ENCODE measurements at regions of chr1 and their contacts with region 1.

Region 1: DNA sequence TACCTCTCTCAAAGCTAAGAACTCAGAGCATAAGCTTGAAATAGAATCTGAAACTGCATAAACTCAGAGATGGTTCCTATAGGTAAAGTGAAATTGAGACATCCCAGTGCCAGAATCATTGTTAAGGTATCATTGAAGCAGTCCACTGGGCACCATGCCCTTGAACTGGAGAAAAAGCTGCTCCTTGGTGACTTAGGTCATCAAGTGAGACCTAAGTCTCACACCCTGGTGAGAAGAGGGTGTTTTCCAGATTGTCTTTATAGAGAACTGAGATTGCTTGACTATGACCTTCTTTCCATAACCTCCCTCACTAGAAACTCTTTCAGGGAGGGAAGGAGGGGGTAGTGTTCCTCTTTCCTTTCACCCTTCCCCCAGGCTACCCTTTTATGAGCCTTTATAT is 9.4 kb upstream of the ATP6V1G3 start:
- DNase-seq: no peak
- H3K4me3 ChIP-seq: no peak overlapping the region
- H3K27ac ChIP-seq: peak overlapping the region in 5 of 8 donors; percentile 8 to 36 (median 10)
- H3K4me1 ChIP-seq: peaks cover 0 to 41% (median 16%) of the 10 kb centered on the region in 6 donors
- H3K27me3 ChIP-seq: no peaks in the 10 kb centered on the region
- CTCF ChIP-seq: no peak
- POLR2A ChIP-seq: no peak

Region 2: GRCh38 chr1:198598796-198599321 is 49.0 kb after region 1 on chr1:
- intact Hi-C with region 1: loop called (anchors 10 kb)
- DNase-seq: peak; percentile 66
- H3K4me3 ChIP-seq: peak overlapping the region in 2 of 8 donors; percentile 24 to 54
- H3K27ac ChIP-seq: peak overlapping the region; percentile 36 to 87 (median 80)
- H3K4me1 ChIP-seq: peaks cover 0 to 81% (median 34%) of the 10 kb centered on the region in 6 donors
- H3K27me3 ChIP-seq: no peaks in the 10 kb centered on the region
- CTCF ChIP-seq: no peak
- POLR2A ChIP-seq: no peak

Measured in spleen (tissue), 13 donors.